ENCODE measurements at regions of chr17 and their contacts with region 1.

Region 1: DNA sequence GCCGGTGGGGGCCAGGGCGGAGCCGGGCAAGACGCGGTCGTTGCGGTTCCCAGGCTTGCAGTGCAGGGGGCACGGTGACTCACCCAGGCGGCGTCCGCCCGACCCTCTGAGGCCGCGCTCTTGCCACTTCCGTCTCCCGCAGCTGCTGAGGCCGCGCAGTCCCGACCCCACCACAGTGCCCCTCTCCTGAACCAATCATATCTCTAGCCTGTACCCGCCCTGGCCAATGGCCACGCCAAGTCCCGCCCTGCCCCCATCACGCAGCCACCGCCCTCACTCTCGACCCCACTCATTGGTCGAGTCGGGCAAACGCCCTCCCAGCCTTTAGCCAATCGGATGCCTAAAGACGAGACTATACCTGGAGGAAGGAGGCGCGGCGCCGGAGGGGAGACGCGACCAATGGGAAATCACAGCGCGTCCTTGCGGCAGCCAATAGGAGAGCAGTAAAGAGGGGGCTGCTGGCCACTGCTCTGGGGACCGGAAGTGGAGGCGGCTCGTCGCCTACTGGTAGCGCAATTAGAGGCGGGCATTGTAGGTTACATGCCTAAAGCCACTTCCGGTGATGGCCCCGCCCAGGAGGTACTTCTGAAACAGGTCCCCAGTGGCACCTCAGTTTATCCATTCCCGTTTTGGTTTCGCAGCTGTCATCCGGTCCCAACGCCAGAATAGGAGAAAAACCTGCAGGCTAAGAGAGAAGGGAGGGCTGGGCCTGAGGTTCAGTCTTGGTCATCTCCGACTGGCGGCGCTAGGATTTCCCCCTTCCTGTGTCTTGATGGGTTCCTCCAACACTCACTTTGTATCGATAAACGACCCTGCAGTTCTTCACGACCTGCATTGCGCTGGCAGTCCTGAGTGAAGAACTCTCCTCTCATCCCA is 3.5 kb upstream of the MTMR4 start:
- DNase-seq: peak; percentile 100
- ATAC-seq: peak; percentile 87
- H3K4me3 Mint-ChIP-seq: peak overlapping the region; percentile 96
- H3K27ac Mint-ChIP-seq: peak overlapping the region; percentile 95
- H3K4me1 Mint-ChIP-seq: peaks cover 32% of the 10 kb centered on the region
- H3K27me3 Mint-ChIP-seq: no peaks in the 10 kb centered on the region

Region 2: GRCh38 chr17:57255776-57256681 is 1261.9 kb before region 1 on chr17 and contains the start of gene MSI2:
- CTCF ChIA-PET with region 1: no interaction called
- POLR2A ChIA-PET with region 1: no interaction called
- intact Hi-C with region 1: loop called in 1 of 2 experiments (anchors 5 kb)
- DNase-seq: peak; percentile 93
- ATAC-seq: peak; percentile 75
- H3K4me3 Mint-ChIP-seq: peak within 1 kb of the TSS; percentile 80
- H3K27ac Mint-ChIP-seq: peak within 1 kb of the TSS; percentile 79
- H3K4me1 Mint-ChIP-seq: peaks cover 42% of the 10 kb centered on the region
- H3K27me3 Mint-ChIP-seq: no peaks in the 10 kb centered on the region
- total RNA-seq, gene MSI2: 55.3 to 57.2 TPM

Region 3: GRCh38 chr17:58219001-58219788 is 298.8 kb before region 1 on chr17 and contains the start of gene MKS1:
- CTCF ChIA-PET with region 1: no interaction called
- POLR2A ChIA-PET with region 1: no interaction called
- intact Hi-C with region 1: loop called in 1 of 2 experiments (anchors 1 kb)
- DNase-seq: peak; percentile 98
- ATAC-seq: peak; percentile 100
- H3K4me3 Mint-ChIP-seq: peak within 1 kb of the TSS; percentile 90
- H3K27ac Mint-ChIP-seq: peak within 1 kb of the TSS; percentile 86
- H3K4me1 Mint-ChIP-seq: peaks cover 22% of the 10 kb centered on the region
- H3K27me3 Mint-ChIP-seq: peaks cover 2% of the 10 kb centered on the region
- total RNA-seq, gene MKS1: 20.4 to 22.5 TPM

Region 4: DNA sequence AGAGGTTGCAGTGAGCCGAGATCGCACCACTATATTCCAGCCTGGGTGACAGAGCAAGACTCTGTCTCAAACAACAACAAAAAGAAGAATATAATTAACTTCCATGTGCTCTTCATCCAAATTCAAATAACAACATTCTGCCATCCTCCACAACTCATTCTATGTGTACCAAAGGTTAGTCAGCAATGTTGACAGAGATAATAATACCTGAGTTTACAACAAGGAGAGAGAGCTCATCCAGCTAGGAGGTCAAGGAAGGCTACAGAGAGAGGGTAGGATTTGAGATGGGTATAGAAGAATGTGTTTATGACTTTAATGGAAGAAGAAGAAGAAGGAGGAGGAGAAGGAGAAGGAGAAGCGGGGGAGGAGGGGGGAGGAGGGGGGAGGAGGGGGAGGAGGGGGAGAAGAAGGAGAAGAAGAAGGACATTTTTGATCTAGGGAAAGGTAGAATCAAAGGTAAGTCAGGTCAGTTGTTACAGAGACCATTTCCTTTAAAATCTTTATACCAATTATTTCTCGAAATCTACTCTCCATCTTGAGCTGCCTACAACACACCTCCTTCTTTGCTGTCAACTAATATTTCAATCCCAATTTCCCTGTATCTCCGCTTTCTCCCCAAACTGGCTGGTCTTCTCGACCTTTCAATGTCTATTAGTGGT is 19.7 kb before region 1 on chr17:
- CTCF ChIA-PET with region 1: interaction called, 5 read pairs
- POLR2A ChIA-PET with region 1: interaction called, 10 read pairs
- intact Hi-C with region 1: no loop called
- DNase-seq: no peak
- ATAC-seq: no peak
- H3K4me3 Mint-ChIP-seq: no peak overlapping the region
- H3K27ac Mint-ChIP-seq: no peak overlapping the region
- H3K4me1 Mint-ChIP-seq: peaks cover 10% of the 10 kb centered on the region
- H3K27me3 Mint-ChIP-seq: no peaks in the 10 kb centered on the region

Region 5: GRCh38 chr17:58658804-58659713 is 141.1 kb after region 1 on chr17:
- CTCF ChIA-PET with region 1: no interaction called
- POLR2A ChIA-PET with region 1: interaction called, 6 read pairs
- intact Hi-C with region 1: loop called (anchors 1 kb)
- DNase-seq: peak; percentile 84
- ATAC-seq: peak; percentile 91
- H3K4me3 Mint-ChIP-seq: peak overlapping the region; percentile 70
- H3K27ac Mint-ChIP-seq: peak overlapping the region; percentile 97
- H3K4me1 Mint-ChIP-seq: peaks cover 18% of the 10 kb centered on the region
- H3K27me3 Mint-ChIP-seq: peaks cover 3% of the 10 kb centered on the region

Region 6: DNA sequence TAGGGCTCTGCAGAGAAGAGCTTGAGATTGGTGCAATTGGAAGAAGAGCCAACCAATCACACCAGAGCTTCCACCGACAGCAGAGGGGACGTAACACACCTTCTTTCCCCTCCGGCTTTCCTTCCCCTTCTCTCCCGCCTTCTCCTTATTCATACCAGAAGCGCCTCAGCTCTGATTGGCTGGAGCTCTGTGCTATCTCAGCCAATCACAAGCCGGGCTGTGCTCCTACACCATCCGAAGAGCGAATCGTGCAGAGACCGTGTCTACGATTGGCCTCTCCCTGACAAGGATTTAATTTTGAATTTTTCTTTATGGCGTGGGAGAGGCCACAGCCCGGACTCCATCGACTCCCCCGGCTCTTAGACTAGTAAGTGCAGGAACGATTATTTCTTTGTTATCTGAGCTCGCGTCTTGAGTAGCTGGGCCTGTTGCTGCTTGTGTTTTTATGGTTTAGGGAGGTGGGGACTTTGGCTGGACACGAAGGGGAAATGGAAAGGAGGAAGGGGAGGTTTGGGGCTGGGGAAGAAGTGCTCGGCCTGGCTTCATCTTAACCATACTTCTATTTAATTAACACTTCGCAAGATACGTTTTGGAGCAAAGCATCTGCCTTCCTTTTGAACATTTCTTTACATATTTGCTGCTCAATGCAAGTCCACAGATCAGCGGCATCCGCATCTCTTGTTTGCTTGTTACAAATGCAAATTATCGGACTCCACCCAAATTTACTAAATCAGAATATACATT is 637.6 kb after region 1 on chr17 and contains the start of gene PRR11:
- CTCF ChIA-PET with region 1: no interaction called
- POLR2A ChIA-PET with region 1: no interaction called
- intact Hi-C with region 1: loop called (anchors 1 kb)
- DNase-seq: peak; percentile 96
- ATAC-seq: peak; percentile 89
- H3K4me3 Mint-ChIP-seq: no peak within 1 kb of the TSS
- H3K27ac Mint-ChIP-seq: no peak within 1 kb of the TSS
- H3K4me1 Mint-ChIP-seq: peaks cover 37% of the 10 kb centered on the region
- H3K27me3 Mint-ChIP-seq: no peaks in the 10 kb centered on the region
- total RNA-seq, gene PRR11: 73.6 to 95.9 TPM